HEK293 (cell line): ENCODE measurements at regions of chr2 and their contacts with region 1.

Region 1: GRCh38 chr2:177332041-177332991 is 60.3 kb upstream of the AGPS start:
- H3K4me3 ChIP-seq: no peak overlapping the region
- H3K27ac ChIP-seq: no peak overlapping the region
- H3K4me1 ChIP-seq: no peaks in the 10 kb centered on the region
- CTCF ChIP-seq: peak; percentile 72

Region 2: DNA sequence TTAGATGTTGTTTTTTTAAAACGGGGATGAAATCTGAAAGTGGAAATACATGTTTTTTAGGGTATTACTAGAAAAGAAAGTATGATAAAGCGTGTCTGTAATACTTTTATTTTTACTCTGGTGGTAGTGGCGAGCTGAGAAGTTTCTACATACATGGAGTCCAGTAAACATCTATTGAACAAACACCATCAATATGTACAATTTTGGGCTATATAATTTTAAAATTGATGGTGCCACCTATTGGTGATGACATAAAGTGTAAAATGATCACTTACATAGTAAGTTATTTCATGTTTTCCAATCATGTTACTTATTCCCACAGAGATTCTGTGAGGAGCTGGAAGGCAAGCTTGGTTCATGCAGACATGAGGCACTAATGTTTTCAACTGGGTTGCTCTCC is 36.3 kb before region 1 on chr2:
- CTCF ChIA-PET with region 1: interaction called, 13 read pairs
- POLR2A ChIA-PET with region 1: no interaction called
- H3K4me3 ChIP-seq: no peak overlapping the region
- H3K27ac ChIP-seq: no peak overlapping the region
- H3K4me1 ChIP-seq: no peaks in the 10 kb centered on the region
- CTCF ChIP-seq: no peak

Region 3: GRCh38 chr2:177392373-177393202 is 60.3 kb after region 1 on chr2 and contains the start of gene AGPS:
- CTCF ChIA-PET with region 1: interaction called, 12 read pairs
- POLR2A ChIA-PET with region 1: no interaction called
- H3K4me3 ChIP-seq: peak within 1 kb of the TSS; percentile 91
- H3K27ac ChIP-seq: peak within 1 kb of the TSS; percentile 61; the same call in 1 of the 2 replicates
- H3K4me1 ChIP-seq: peaks cover 4% of the 10 kb centered on the region; the same call in 1 of the 2 replicates
- CTCF ChIP-seq: no peak

Region 4: DNA sequence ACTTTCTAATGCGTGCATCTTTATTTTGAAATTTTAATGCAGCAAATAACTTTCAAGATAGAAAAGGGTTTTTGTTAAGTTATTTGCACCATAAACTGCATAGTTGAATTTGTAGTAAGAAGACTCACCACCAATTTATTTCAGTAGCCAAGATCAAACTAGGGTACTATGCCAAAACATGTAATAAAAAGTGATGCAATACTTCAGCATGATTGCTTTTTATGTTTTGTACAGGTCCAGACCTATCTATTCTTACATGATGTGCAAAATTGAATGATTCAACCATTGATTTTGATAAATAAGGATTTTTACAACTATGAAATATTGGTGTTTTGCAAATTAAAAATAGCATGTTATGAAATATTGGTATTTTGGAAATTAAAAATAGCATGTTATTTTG is 87.0 kb after region 1 on chr2:
- CTCF ChIA-PET with region 1: interaction called, 133 read pairs
- POLR2A ChIA-PET with region 1: no interaction called
- H3K4me3 ChIP-seq: no peak overlapping the region
- H3K27ac ChIP-seq: no peak overlapping the region
- H3K4me1 ChIP-seq: no peaks in the 10 kb centered on the region; the same call in 1 of the 2 replicates
- CTCF ChIP-seq: no peak

Region 5: GRCh38 chr2:177604271-177605065 is 272.2 kb after region 1 on chr2:
- CTCF ChIA-PET with region 1: interaction called, 18 read pairs
- POLR2A ChIA-PET with region 1: no interaction called
- H3K4me3 ChIP-seq: no peak overlapping the region
- H3K27ac ChIP-seq: no peak overlapping the region
- H3K4me1 ChIP-seq: no peaks in the 10 kb centered on the region
- CTCF ChIP-seq: peak; percentile 61

Region 6: GRCh38 chr2:177763532-177764265 is 431.4 kb after region 1 on chr2:
- CTCF ChIA-PET with region 1: interaction called, 26 read pairs
- POLR2A ChIA-PET with region 1: no interaction called
- H3K4me3 ChIP-seq: no peak overlapping the region
- H3K27ac ChIP-seq: no peak overlapping the region
- H3K4me1 ChIP-seq: no peaks in the 10 kb centered on the region; the same call in 1 of the 2 replicates
- CTCF ChIP-seq: peak; percentile 85